Activated B cell treated with CpG ODN at 0.5 μM for 24 hours (primary cell): ENCODE measurements at regions of chr19 and their contacts with region 1.

Region 1: DNA sequence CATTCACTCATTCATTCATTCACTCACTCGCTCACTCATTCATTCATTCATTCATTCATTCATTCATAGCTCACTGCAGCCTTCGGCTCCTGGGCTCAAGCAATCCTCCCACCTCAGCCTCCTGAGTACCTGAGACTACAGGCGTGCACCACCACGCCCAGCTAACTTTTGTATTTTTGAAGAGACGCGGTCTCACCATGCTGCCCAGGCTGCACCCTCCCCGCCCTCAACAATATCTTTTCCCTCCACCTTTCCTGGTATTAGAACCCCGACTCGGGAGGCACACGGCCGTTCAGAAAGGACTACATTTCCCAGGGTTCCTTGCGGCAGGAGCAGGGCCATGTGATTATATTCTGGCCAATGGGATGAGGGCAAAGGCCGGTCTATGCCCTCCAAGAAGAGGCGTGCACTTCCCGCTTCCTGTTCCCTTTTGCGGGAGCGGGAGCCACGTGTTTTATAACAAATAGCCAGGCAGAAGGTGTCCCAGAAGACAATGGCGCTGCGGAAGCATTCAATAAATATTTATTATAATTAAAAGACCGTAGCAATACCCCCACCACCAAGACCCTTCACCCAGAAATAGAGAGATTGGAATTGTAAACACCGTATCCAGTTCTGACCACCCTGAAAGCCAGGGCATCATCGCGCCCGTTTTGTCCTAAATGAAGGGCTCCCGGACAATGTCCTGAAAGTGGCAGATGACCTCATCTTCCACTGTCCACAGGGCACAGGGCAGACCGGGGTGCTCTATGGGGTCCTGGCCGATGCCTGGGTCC is 15.9 kb downstream of the TICAM1 start:
- DNase-seq: peak; percentile 39
- ATAC-seq: peak; percentile 72
- H3K4me3 Mint-ChIP-seq: peak overlapping the region; percentile 70
- H3K27ac Mint-ChIP-seq: peak overlapping the region; percentile 72
- H3K4me1 Mint-ChIP-seq: peaks cover 34% of the 10 kb centered on the region
- H3K27me3 Mint-ChIP-seq: no peaks in the 10 kb centered on the region
- CTCF ChIP-seq: no peak

Region 2: GRCh38 chr19:4744451-4745174 is 71.0 kb before region 1 on chr19:
- CTCF ChIA-PET with region 1: no interaction called
- POLR2A ChIA-PET with region 1: no interaction called
- intact Hi-C with region 1: no loop called
- DNase-seq: no peak
- ATAC-seq: no peak
- H3K4me3 Mint-ChIP-seq: no peak overlapping the region
- H3K27ac Mint-ChIP-seq: no peak overlapping the region
- H3K4me1 Mint-ChIP-seq: no peaks in the 10 kb centered on the region
- H3K27me3 Mint-ChIP-seq: peaks cover 38% of the 10 kb centered on the region
- CTCF ChIP-seq: no peak

Region 3: GRCh38 chr19:4831304-4831978 is 15.8 kb after region 1 on chr19 and contains the start of gene TICAM1:
- CTCF ChIA-PET with region 1: interaction called, 53 read pairs
- POLR2A ChIA-PET with region 1: interaction called, 9 read pairs
- intact Hi-C with region 1: loop called (anchors 1 kb)
- DNase-seq: peak; percentile 78
- ATAC-seq: peak; percentile 76
- H3K4me3 Mint-ChIP-seq: peak within 1 kb of the TSS; percentile 90
- H3K27ac Mint-ChIP-seq: peak within 1 kb of the TSS; percentile 94
- H3K4me1 Mint-ChIP-seq: peaks cover 40% of the 10 kb centered on the region
- H3K27me3 Mint-ChIP-seq: no peaks in the 10 kb centered on the region
- CTCF ChIP-seq: no peak
- total RNA-seq, gene TICAM1: 34.4 and 39.4 TPM in 2 replicates

Region 4: DNA sequence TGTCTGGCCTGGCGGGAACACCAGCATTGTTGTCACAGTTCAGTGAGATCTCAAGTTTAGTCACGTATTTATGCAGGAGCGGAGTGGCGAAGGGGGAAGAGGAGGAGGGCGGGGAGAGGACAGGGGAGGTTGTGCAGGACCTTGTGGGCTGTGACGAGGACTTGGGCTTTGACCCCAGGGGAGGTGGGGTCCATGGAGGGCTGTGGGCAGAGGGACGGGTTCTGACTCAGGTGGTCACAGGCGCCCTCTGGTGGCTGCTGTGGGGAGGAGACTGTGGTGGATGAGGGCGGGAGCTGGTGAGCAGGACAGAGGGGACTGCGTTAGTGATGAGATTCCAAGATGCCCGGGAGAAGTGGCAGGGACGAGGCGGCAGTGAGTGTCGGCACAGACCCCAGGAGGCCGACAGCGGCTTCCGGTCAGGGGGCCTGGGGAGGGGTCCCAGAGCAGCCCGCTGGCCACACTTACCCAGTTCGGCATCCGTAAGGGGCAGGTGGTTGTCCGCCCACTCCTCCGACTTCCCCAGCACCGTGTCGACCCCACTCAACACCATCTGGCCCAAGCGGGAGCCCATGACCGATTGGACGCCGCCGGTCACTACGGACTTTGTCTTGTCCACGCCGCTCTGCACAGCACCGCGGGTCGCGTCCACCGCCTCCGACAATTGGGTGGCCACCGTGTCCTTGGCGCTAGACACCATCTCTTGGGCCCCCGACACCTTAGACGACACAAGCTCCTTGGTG is 36.1 kb after region 1 on chr19:
- CTCF ChIA-PET with region 1: interaction called, 292 read pairs
- POLR2A ChIA-PET with region 1: interaction called, 30 read pairs
- intact Hi-C with region 1: no loop called
- DNase-seq: peak; percentile 77
- ATAC-seq: peak; percentile 94
- H3K4me3 Mint-ChIP-seq: no peak overlapping the region
- H3K27ac Mint-ChIP-seq: no peak overlapping the region
- H3K4me1 Mint-ChIP-seq: peaks cover 17% of the 10 kb centered on the region
- H3K27me3 Mint-ChIP-seq: no peaks in the 10 kb centered on the region
- CTCF ChIP-seq: peak; percentile 63

Region 5: DNA sequence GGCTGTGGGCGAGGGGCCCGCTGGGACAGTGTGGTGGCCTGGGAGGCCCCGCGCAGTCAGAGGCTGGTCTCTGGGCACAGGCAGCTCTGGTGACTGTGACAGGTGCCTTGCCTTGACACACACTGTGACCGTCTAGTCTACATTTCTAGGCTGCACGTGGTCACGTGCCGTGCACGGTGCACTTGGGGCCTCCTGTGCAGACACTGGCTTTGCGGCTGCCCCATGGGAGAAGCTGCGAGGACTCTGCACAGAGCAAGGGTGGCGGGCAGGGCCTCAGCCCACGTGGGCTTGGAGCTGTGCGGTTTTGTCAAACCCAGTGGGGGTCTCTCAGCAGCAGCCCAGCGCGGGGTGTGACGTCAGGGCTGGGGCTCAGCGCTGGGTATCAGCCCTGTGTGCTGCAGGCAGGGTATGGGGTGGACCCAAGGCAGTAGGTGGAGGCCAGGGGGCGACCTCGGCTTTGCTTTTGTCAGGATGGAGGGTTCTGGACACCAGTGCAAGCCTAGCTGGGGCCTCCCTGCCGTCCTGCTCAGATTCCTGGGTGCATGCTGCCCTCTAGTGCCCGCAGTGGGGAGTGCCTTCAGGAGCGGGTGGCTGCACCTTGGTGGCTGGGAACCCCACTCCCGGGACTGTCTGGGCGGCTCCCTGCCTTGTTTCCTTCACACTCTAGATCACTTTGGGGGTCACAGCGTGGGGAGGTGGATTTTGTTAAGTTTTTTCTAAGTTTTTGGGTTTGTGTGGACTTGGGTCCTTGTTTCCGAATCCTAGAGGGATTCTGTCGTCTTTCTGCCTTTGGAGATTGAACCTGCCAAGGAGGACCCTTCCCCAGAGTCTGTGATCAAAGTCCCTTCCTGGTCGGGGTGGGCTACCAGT is 215.9 kb after region 1 on chr19:
- CTCF ChIA-PET with region 1: interaction called, 94 read pairs
- POLR2A ChIA-PET with region 1: no interaction called
- intact Hi-C with region 1: loop called (anchors 1 kb)
- DNase-seq: peak; percentile 85
- ATAC-seq: peak; percentile 94
- H3K4me3 Mint-ChIP-seq: no peak overlapping the region
- H3K27ac Mint-ChIP-seq: no peak overlapping the region
- H3K4me1 Mint-ChIP-seq: peaks cover 17% of the 10 kb centered on the region
- H3K27me3 Mint-ChIP-seq: no peaks in the 10 kb centered on the region
- CTCF ChIP-seq: peak; percentile 33